H1 (cell line): ENCODE measurements at regions of chr2 and their contacts with region 1.

Region 1: DNA sequence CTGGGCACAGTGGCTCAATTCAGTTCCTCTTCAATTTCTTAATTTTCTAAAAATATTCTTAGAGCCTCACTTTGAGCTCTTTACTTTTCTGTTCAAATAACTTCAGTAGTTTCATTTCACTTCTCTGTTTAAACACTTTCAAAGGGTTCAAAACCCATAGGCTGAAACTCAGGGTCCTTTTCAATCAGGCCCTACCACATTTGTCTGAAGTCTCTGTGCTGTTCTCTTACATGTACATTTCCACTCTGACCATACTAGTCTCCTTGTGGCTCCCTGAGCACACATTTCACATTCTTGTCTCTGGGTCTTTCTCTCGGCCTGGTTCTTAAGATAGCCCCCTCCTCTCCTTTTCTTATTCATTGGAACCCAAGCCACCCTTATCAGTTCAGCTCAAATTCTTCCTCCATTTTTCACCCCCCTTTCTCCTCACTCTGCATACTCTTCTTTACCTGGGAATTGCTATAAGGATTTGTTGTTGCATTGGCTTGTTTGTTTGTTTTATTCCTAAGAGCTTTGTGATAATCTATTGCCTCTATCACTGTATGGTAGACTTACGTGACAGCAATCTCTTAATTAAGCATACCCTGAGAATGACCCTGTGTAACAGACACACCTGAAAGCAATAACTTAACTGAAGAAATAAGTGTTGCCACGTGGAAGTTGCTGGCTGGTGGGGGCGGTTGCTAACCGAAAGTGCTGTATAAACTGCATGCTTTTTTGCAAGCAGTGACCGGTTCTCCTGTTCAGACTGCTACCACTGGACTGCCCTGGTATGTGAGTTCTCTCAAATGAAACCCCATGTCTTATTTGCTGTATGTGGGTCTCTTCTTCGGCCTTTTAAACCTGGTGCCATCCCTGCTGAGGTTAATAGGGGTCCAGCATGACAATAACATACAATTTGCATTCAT is 27.7 kb upstream of the ACADL start:
- DNase-seq: no peak
- H3K4me3 ChIP-seq: no peak overlapping the region
- H3K27ac ChIP-seq: no peak overlapping the region
- H3K4me1 ChIP-seq: peaks cover 0 to 3% (median 0%) of the 10 kb centered on the region in 4 experiments; a peak in 1 of 7 replicates
- H3K27me3 ChIP-seq: no peaks in the 10 kb centered on the region
- CTCF ChIP-seq: no peak
- EP300 ChIP-seq: no peak
- POLR2A ChIP-seq: no peak
- RAD21 ChIP-seq: no peak

Region 2: DNA sequence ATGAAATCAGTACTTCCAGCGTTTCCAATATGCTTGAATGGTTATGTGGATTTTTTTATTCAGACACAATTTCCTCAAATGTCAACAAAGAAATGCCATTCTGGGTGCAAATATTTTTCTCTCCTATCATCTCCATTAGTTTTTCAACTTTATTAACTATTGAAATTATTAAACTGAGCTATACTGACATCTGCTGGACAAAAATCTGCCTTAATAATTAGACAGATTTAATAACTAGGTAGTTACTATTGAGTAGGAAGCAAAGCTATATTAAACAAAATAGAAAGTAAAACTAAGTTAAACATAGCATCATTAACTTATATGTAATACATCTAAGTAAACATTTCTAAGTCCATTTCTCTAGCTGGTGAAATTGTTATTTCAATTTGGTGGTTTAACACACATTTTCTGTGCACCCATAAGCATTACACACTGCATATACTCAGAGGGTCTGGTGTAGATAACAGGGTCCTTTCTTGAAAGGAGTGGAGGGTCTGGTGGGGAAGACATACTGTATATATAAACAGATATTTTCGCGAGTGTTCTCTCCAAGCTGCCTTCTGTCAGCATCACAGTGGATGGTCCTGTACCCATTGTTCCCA is 146.6 kb after region 1 on chr2:
- CTCF ChIA-PET with region 1: interaction called, 14 read pairs
- POLR2A ChIA-PET with region 1: no interaction called
- DNase-seq: no peak
- H3K4me3 ChIP-seq: no peak overlapping the region
- H3K27ac ChIP-seq: no peak overlapping the region
- H3K4me1 ChIP-seq: no peaks in the 10 kb centered on the region
- H3K27me3 ChIP-seq: no peaks in the 10 kb centered on the region
- CTCF ChIP-seq: no peak; a peak in 1 of 4 replicates
- EP300 ChIP-seq: no peak
- POLR2A ChIP-seq: no peak
- RAD21 ChIP-seq: peak in 1 of 2 experiments; percentile 13; a peak in 2 of 4 replicates